Activated CD4-positive, alpha-beta T cell treated with anti-CD3 and anti-CD28 coated beads, Interleukin-2, amount 10 ng/mL, durations not matched to agents 24 days and 14 days (primary cell): ENCODE measurements at regions of chr1 and their contacts with region 1.

Region 1: GRCh38 chr1:46247436-46248121 is at the start of gene RAD54L:
- DNase-seq: peak; percentile 99
- H3K4me3 Mint-ChIP-seq: peak within 1 kb of the TSS; percentile 90
- H3K27ac Mint-ChIP-seq: peak within 1 kb of the TSS; percentile 96
- H3K4me1 Mint-ChIP-seq: peaks cover 36% of the 10 kb centered on the region
- H3K27me3 Mint-ChIP-seq: no peaks in the 10 kb centered on the region
- total RNA-seq, gene RAD54L: 55.5 and 59.6 TPM in 2 replicates

Region 2: GRCh38 chr1:46203738-46204405 is 43.7 kb before region 1 on chr1:
- intact Hi-C with region 1: loop called (anchors 1 kb)
- DNase-seq: no peak
- H3K4me3 Mint-ChIP-seq: peak overlapping the region; percentile 89
- H3K27ac Mint-ChIP-seq: no peak overlapping the region
- H3K4me1 Mint-ChIP-seq: peaks cover 13% of the 10 kb centered on the region
- H3K27me3 Mint-ChIP-seq: peaks cover 3% of the 10 kb centered on the region

Region 3: GRCh38 chr1:46262508-46262907 is 14.9 kb after region 1 on chr1:
- intact Hi-C with region 1: no loop called
- DNase-seq: no peak
- H3K4me3 Mint-ChIP-seq: no peak overlapping the region
- H3K27ac Mint-ChIP-seq: no peak overlapping the region
- H3K4me1 Mint-ChIP-seq: no peaks in the 10 kb centered on the region
- H3K27me3 Mint-ChIP-seq: no peaks in the 10 kb centered on the region

Region 4: GRCh38 chr1:46303038-46303871 is 55.7 kb after region 1 on chr1 and contains the starts of genes LRRC41 and UQCRH:
- intact Hi-C with region 1: loop called (anchors 1 kb)
- DNase-seq: peak; percentile 98
- H3K4me3 Mint-ChIP-seq: peak within 1 kb of the TSS; percentile 99
- H3K27ac Mint-ChIP-seq: peak within 1 kb of the TSS; percentile 98
- H3K4me1 Mint-ChIP-seq: peaks cover 39% of the 10 kb centered on the region
- H3K27me3 Mint-ChIP-seq: no peaks in the 10 kb centered on the region
- total RNA-seq, gene LRRC41: 63.1 and 64.6 TPM in 2 replicates
- total RNA-seq, gene UQCRH: 283 and 306 TPM in 2 replicates

Region 5: GRCh38 chr1:46340404-46341221 is 93.0 kb after region 1 on chr1 and contains the start of gene NSUN4:
- intact Hi-C with region 1: loop called (anchors 1 kb)
- DNase-seq: peak; percentile 96
- H3K4me3 Mint-ChIP-seq: peak within 1 kb of the TSS; percentile 99
- H3K27ac Mint-ChIP-seq: peak within 1 kb of the TSS; percentile 100
- H3K4me1 Mint-ChIP-seq: peaks cover 33% of the 10 kb centered on the region
- H3K27me3 Mint-ChIP-seq: no peaks in the 10 kb centered on the region
- total RNA-seq, gene NSUN4: 40.4 and 46.5 TPM in 2 replicates